Activated CD4-positive, alpha-beta memory T cell treated with anti-CD3 and anti-CD28 coated beads, Interleukin-2, amount 10 ng/mL, durations not matched to agents 7 days and 5 days (primary cell): ENCODE measurements at regions of chr10 and their contacts with region 1.

Region 1: DNA sequence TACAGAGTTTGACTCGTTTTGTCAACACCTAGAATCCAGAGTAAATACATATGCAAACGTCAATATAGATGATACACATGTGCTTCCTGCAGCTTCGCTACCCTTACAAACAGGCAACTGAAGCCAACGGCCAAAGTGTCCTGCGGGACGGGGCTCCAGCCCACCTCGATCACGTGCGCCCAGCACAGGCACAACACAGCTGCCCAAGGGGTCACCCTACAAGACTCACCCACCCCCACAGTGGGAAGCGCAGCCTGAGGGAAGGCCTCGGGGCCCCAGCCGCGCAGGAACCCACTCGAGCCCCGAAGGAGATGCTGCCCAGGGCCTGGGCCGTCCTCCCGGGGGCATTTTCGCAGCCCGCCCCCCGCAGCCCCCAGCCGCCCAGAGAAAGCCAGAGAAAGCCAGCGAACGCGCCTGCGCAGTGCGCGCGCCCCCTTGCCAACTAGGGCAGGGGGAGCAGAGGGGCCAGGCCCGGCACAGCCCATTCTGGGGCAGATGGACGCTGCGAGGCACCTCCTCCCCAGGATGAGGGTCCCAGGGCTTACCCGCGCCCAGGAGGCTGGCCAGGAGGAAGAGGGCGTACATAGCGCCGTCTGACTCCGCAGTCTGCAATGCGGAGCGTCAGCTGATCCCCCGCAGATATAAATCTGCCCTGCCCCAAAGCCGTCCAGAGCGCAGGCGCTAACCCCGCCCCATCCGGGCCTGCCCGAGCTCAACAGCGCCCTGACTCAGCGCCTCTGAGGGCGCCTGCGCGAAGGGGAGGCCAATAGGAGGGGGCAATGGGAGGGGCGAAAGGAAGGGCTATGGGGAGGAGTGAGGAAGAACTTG is at the start of gene PSAP:
- DNase-seq: peak; percentile 98
- H3K4me3 Mint-ChIP-seq: peak within 1 kb of the TSS; percentile 88
- H3K27ac Mint-ChIP-seq: peak within 1 kb of the TSS; percentile 73
- H3K4me1 Mint-ChIP-seq: peaks cover 41% of the 10 kb centered on the region
- H3K27me3 Mint-ChIP-seq: peaks cover 4% of the 10 kb centered on the region
- total RNA-seq, gene PSAP: 176 to 178 TPM

Region 2: GRCh38 chr10:71840177-71840957 is 10.5 kb before region 1 on chr10:
- CTCF ChIA-PET with region 1: no interaction called
- POLR2A ChIA-PET with region 1: interaction called, 19 read pairs
- DNase-seq: no peak
- H3K4me3 Mint-ChIP-seq: no peak overlapping the region
- H3K27ac Mint-ChIP-seq: no peak overlapping the region
- H3K4me1 Mint-ChIP-seq: peaks cover 33% of the 10 kb centered on the region
- H3K27me3 Mint-ChIP-seq: no peaks in the 10 kb centered on the region

Region 3: DNA sequence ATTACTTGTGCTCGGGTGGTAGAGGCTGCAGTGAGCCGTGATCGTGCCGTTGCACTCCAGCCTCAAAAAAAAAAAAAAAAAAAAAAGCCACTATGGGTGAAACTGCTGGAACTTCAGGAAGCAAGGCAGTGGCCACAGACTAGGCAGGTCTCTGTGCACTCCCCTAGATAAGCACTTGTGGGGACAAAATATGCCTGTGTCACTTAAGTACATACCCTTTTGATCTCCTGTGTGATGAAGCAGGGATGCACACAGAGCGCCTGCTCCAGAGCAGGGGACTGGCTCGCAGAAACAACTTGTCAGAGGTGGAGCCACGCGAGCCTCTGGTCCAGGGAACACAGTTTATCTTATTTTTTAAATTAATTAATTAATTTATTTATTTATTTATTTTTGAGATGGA is 43.1 kb after region 1 on chr10:
- CTCF ChIA-PET with region 1: interaction called, 20 read pairs
- POLR2A ChIA-PET with region 1: interaction called, 3 read pairs
- DNase-seq: no peak
- H3K4me3 Mint-ChIP-seq: no peak overlapping the region
- H3K27ac Mint-ChIP-seq: no peak overlapping the region
- H3K4me1 Mint-ChIP-seq: peaks cover 9% of the 10 kb centered on the region
- H3K27me3 Mint-ChIP-seq: peaks cover 9% of the 10 kb centered on the region